Right ventricle myocardium inferior (tissue), 1 donor: ENCODE measurements at regions of chr3 and their contacts with region 1.

Region 1: GRCh38 chr3:37054370-37054769 is 61.1 kb downstream of the MLH1 start:
- DNase-seq: no peak
- ATAC-seq: peak; percentile 84

Region 2: GRCh38 chr3:36837089-36837488 is 217.3 kb before region 1 on chr3:
- intact Hi-C with region 1: no loop called
- DNase-seq: no peak
- ATAC-seq: no peak

Region 3: DNA sequence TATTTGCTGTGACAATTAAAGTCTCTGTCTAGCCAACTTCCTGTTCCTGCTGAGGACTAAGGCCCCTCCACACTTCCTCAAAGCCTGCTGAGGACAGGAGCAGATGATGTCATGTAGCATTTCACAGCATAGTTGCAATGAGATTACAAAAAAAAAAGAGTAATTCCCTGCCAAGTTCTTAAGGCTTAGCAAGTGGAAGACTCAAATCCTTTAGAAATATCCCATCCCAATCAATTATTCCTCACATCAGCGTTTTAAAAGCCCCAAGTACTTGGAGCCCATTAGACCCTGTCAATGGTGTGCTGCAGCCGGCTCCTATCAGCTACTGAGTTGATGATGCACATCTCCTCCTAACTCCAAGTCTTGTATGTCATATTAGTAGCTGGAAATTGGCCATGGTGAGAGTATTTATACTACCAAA is 161.2 kb before region 1 on chr3:
- intact Hi-C with region 1: no loop called
- DNase-seq: no peak
- ATAC-seq: peak; percentile 78

Region 4: DNA sequence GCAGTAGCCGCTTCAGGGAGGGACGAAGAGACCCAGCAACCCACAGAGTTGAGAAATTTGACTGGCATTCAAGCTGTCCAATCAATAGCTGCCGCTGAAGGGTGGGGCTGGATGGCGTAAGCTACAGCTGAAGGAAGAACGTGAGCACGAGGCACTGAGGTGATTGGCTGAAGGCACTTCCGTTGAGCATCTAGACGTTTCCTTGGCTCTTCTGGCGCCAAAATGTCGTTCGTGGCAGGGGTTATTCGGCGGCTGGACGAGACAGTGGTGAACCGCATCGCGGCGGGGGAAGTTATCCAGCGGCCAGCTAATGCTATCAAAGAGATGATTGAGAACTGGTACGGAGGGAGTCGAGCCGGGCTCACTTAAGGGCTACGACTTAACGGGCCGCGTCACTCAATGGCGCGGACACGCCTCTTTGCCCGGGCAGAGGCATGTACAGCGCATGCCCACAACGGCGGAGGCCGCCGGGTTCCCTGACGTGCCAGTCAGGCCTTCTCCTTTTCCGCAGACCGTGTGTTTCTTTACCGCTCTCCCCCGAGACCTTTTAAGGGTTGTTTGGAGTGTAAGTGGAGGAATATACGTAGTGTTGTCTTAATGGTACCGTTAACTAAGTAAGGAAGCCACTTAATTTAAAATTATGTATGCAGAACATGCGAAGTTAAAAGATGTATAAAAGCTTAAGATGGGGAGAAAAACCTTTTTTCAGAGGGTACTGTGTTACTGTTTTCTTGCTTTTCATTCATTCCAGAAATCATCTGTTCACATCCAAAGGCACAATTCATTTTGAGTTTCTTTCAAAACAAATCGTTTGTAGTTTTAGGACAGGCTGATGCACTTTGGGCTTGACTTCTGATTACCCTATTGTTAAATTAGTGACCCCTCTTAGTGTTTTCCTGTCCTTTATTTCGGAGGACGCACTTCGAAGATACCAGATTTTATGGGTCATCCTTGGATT is 60.8 kb before region 1 on chr3 and contains the start of gene MLH1:
- intact Hi-C with region 1: loop called (anchors 10 kb)
- DNase-seq: peak; percentile 97
- ATAC-seq: peak; percentile 96
- total RNA-seq, gene MLH1: 49.3 TPM

Region 5: DNA sequence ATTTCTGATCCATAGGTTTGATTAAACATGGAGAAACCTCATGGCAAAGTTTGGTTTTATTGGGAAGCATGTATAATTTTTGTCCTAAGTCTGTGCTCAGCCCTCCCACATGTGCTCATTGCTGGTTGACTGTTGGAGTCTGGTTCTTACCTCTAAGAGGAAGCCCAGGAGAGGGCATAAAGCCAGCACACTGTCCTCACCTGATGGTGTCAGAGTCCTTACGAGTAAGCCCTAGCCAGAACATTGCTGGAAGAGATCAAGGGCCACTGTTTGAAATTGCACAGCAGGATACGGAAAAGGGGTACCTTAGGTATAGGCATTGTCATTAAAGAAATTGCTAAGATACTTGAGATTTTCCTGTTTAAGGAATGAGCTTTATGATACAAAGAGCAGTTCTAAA is 39.8 kb before region 1 on chr3:
- intact Hi-C with region 1: loop called (anchors 5 kb)
- DNase-seq: peak; percentile 69
- ATAC-seq: peak; percentile 80

Region 6: DNA sequence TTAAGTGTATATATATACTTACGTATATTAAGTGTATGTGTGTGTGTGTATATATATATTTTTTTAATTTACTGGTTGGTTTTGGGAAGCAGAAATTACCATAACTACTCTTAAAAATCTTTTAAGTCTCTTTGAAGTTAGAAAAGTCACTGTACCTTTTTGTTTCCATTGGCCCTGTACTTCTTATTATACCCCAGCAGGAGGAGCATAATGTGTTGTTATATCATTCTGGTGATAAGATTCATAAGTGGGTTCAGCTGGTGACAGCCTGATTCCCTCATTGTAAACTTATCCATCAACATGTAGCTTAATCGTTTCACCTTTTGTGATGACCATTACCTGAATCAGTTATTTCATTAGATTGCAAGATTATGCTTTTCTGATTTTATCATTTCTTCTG is 30.3 kb before region 1 on chr3:
- intact Hi-C with region 1: loop called (anchors 2 kb)
- DNase-seq: no peak
- ATAC-seq: no peak

Region 7: GRCh38 chr3:37210230-37210629 is 155.9 kb after region 1 on chr3:
- intact Hi-C with region 1: loop called (anchors 10 kb)
- DNase-seq: no peak
- ATAC-seq: peak; percentile 60